ENCODE measurements at regions of chr12 and their contacts with region 1.

Region 1: DNA sequence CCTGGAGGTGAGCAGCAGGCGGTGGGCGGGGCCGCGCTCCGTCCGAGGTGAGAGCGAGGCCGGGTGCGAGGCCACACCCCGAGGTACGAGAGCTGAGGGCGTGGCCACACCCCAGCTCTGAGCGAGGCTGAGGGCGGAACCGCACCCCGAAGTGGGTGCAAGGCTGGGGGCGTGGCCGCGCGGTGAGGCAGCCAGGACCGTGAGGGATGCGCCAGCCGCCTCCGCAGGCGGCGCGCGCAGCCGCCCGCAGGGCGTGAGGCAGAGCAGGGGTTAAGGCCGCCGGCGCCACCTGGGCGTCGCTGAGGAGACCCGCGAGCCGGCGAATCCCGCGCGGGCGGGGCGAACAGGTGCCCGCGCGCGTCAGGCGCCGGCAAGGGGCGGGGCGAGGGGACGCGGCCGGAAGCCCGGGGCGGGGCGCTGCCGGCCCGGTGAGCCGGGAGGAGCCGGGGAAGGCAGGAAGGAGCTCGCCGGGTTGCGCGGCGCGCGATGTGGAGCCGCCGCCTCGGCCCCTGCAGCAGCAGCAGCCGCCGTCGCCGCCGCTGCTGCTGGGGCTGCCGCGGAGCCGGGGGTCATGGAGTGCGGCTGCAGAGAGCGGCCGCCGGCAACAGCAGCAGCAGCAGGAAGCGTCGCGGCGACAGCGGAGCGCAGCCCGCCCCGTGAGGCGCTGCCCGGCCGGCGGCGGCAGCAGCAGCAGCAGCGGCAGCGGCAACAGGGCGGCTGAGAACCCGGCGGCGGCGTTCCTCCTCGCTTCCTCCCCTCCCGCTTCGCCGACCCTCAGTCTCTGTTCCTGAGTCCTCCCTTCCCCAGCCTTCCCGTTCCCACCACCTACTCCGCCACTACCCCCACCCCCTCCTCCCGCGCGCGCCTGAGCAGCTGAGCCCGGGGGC is at the start of gene BICDL1:
- DNase-seq: peak; percentile 97
- H3K4me3 Mint-ChIP-seq: peak within 1 kb of the TSS; percentile 94
- H3K27ac Mint-ChIP-seq: peak within 1 kb of the TSS; percentile 91
- H3K4me1 Mint-ChIP-seq: peaks cover 44% of the 10 kb centered on the region
- H3K27me3 Mint-ChIP-seq: peaks cover 1% of the 10 kb centered on the region
- total RNA-seq, gene BICDL1: 127 and 130 TPM in 2 replicates

Region 2: DNA sequence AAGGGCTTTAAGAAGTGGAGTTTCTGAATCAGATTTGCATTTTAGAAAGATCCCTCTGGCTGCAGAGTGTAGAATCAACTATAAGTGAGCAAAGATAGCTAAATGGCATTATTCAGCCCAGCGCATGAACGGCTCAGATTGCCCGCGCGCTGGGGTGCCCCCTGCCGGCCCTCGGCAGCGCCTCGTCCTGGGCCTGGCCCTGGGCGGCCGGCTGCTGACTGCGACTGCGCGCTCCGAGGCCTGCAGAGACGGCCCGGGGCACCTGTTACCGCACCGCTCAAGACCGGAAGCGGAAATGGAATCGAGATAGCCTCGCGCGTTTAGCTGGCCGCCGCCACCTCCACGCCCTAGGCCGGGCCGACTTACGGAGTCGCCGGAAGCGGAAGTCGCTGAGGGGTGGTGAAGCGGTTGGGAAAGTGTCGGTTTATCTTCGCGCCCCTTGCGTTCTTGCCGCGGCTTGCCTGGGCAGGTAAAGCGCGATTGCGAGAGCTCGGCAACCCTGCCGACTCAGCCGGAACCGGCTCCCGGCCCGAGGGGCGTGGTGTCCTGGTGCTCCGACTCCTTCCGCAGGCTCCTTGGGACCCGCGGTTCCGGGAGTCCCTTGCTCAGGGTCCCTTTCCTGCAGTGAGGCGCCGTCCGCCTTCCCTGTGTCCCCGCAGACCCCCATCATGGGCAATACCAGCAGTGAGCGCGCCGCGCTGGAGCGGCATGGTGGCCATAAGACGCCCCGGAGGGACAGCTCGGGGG is 321.3 kb before region 1 on chr12 and contains the start of gene PRKAB1:
- intact Hi-C with region 1: loop called (anchors 10 kb)
- DNase-seq: peak; percentile 96
- H3K4me3 Mint-ChIP-seq: peak within 1 kb of the TSS; percentile 90
- H3K27ac Mint-ChIP-seq: peak within 1 kb of the TSS; percentile 84
- H3K4me1 Mint-ChIP-seq: peaks cover 49% of the 10 kb centered on the region
- H3K27me3 Mint-ChIP-seq: no peaks in the 10 kb centered on the region
- total RNA-seq, gene PRKAB1: 26.8 and 28.2 TPM in 2 replicates

Region 3: GRCh38 chr12:120116792-120117651 is 128.0 kb after region 1 on chr12:
- intact Hi-C with region 1: loop called (anchors 2 kb)
- DNase-seq: peak; percentile 97
- H3K4me3 Mint-ChIP-seq: peak overlapping the region; percentile 86
- H3K27ac Mint-ChIP-seq: peak overlapping the region; percentile 83
- H3K4me1 Mint-ChIP-seq: peaks cover 67% of the 10 kb centered on the region
- H3K27me3 Mint-ChIP-seq: no peaks in the 10 kb centered on the region

Region 4: GRCh38 chr12:120216742-120217605 is 227.9 kb after region 1 on chr12:
- intact Hi-C with region 1: no loop called
- DNase-seq: no peak
- H3K4me3 Mint-ChIP-seq: no peak overlapping the region
- H3K27ac Mint-ChIP-seq: no peak overlapping the region
- H3K4me1 Mint-ChIP-seq: no peaks in the 10 kb centered on the region
- H3K27me3 Mint-ChIP-seq: no peaks in the 10 kb centered on the region

Measured in activated T-helper 2 cell treated with anti-CD3 and anti-CD28 coated beads, Interferon-gamma antibody, Interleukin-2, Interleukin-4, amounts not matched to agents 10 μg/mL and 5 μg/mL and 100 μg/mL, durations not matched to agents 14 hours and 24 hours and 36 hours (primary cell).